ENCODE measurements at regions of chr12 and their contacts with region 1.

Region 1: DNA sequence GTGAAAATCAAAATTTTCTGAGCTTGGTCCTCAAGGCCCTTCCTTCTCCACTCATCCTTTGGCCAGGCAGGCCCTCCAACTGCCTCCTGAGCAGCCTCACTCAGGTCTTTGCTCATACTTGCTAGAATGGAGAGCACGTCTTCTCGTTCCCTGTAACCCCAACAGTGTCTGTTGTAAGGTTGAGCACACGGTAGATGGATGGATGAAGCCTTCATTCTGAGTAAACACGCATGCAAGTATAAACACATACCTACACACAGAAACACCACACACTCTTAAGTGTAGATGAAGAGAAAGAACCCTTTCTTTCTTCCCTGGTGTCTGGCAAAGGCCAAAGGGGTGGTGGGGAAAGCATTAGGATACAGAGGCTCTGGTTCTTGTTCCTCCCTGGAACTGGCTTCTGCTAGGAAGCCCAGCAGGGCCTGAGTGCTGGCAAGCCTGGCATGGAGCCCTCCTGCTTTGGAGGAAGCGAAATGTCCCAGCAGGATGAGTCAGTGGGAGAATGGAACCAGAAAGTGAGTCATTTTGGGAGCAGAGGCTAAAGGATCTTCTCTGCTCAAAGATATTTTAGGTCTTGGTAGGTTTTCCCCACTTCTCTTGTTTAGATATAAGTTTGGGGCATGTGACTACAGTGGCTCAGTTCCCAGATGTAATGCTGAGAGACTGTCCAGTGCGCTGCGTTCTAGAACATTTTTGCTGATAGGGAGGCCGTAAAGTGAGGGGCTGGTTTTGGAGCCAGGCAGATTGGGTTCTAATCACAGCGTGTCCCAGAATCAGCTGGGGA is 127.4 kb downstream of the CACNA1C start:
- DNase-seq: peak; percentile 56 to 65
- ATAC-seq: peak; percentile 52 to 92 (median 78)
- H3K4me3 ChIP-seq: no peak overlapping the region
- H3K27ac ChIP-seq: peak overlapping the region; percentile 65 to 84 (median 72)
- H3K4me1 ChIP-seq: peaks cover 10 to 76% (median 47%) of the 10 kb centered on the region in 9 donors
- H3K27me3 ChIP-seq: no peaks in the 10 kb centered on the region
- CTCF ChIP-seq: no peak

Region 2: DNA sequence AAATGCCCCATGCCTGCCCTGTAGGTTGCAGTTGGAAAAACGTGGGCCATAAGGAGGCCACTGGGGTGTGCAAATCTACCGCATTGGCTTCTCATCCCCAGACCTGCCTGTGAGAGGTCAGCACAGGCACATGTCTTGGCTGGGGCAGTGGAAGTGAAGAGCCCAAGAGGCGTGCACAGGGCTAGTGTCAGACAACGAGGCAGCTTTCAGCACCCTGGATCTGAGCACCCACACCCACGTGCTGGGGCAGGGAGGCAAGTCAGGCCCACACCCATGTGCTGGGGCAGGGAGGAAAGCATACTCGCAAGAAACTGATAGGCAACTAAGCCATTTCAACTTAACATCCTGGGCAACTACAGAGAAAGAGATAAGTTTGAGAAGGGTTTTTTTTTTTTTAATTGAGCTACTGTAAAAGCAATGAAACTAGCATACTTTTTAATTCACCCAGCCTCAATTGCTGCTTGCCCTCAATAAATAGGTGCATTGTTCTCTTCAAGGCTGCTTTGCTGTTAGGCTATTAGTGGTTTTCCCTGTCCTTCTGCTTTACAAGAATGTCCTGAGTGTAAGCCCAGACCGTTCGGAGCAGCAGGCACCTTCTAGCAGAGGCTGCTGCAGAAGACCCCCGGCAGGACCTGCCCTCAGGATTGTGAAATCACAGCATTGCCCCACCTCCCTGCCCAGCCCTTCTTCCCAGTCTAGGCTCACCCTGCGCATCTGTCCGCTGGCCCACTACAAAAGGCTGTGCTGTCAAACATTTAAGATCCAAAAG is 259.4 kb after region 1 on chr12:
- intact Hi-C with region 1: loop called in 1 of 10 experiments (anchors 5 kb)
- DNase-seq: peak; percentile 46 to 67
- ATAC-seq: peak; percentile 70 to 92 (median 82)
- H3K4me3 ChIP-seq: no peak overlapping the region
- H3K27ac ChIP-seq: peak overlapping the region in 2 of 10 donors; percentile 4 to 36
- H3K4me1 ChIP-seq: peaks cover 0 to 69% (median 32%) of the 10 kb centered on the region in 9 donors
- H3K27me3 ChIP-seq: no peaks in the 10 kb centered on the region
- CTCF ChIP-seq: peak in 1 of 9 donors; percentile 11

Region 3: GRCh38 chr12:2494486-2495192 is 314.5 kb after region 1 on chr12:
- intact Hi-C with region 1: no loop called
- DNase-seq: peak in 1 of 2 donors; percentile 77
- ATAC-seq: peak; percentile 41 to 81 (median 58)
- H3K4me3 ChIP-seq: no peak overlapping the region
- H3K27ac ChIP-seq: peak overlapping the region; percentile 15 to 87 (median 72)
- H3K4me1 ChIP-seq: peaks cover 22 to 92% (median 61%) of the 10 kb centered on the region in 9 donors
- H3K27me3 ChIP-seq: no peaks in the 10 kb centered on the region
- CTCF ChIP-seq: no peak